Activated CD4-positive, alpha-beta memory T cell treated with anti-CD3 and anti-CD28 coated beads, Interleukin-2, amount 10 ng/mL, durations not matched to agents 7 days and 5 days (primary cell): ENCODE measurements at regions of chr19 and their contacts with region 1.

Region 1: DNA sequence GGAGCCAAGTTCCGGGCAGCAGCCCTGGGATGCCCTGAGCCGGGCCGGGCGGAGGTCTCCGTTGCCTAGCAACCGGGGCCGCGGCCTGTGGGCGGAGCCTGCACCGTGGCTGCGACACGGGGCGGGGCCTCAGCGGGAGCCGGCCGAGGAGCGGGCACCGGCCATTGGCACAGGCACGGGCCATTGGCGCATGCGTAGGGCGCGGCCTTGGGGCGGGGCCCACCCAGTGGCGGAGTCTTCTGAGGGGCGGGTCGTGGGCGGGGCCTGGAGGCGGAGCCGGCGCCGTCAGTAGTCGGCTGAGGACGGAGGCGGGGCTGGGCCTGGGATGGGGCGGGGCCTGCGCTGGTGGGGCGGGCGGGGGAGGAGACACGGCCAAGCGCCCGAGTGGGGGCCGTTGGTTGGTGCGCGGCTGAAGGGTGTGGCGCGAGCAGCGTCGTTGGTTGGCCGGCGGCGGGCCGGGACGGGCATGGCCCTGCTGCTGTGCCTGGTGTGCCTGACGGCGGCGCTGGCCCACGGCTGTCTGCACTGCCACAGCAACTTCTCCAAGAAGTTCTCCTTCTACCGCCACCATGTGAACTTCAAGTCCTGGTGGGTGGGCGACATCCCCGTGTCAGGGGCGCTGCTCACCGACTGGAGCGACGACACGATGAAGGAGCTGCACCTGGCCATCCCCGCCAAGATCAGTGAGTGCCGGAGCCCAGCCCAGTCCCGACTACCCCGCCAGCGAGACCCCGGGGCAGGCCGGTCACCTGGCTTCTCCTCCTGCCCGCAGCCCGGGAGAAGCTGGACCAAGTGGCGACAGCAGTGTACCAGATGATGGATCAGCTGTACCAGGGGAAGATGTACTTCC is at the start of gene IZUMO4:
- DNase-seq: peak; percentile 100
- H3K4me3 Mint-ChIP-seq: peak within 1 kb of the TSS; percentile 99
- H3K27ac Mint-ChIP-seq: peak within 1 kb of the TSS; percentile 88
- H3K4me1 Mint-ChIP-seq: peaks cover 29% of the 10 kb centered on the region
- H3K27me3 Mint-ChIP-seq: no peaks in the 10 kb centered on the region
- total RNA-seq, gene IZUMO4: 10.3 to 10.5 TPM

Region 2: DNA sequence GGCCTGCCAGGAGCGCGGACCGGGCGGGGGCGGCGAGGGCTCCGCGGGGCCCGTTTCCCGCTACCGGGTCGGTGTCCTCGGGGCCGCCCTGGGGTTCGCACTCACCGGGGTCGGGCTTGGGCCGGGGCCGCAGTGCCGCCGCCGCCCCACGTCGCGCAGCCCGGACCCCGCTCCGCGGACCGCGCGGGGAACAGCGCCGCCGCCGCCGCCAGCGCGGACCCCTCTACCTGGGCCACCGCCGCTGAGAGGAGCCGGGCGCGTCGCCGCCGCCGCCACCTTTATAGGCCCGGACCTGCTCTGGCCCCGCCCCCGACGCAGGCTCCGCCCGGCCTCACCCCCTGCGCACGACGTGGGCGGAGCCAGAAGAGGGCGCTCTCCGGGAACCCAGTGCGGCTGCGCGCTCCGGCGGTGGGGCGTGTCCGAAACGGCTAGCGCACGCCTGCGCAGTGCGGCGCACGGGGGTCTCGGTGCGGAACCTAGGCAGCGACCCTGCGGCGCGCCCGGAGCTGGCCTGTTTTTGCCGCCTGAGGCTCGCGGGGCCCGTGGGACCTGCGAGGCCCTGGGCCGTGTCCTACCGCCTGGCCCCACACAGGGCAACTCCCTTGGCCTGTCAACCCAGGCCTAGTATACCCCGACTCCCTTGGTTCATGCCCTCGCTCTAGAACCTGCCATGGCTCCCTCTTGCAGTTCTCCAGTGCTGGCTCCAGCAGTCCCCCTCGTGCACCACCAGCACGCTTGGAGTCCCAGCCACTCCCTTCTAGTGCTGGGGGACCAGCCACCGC is 45.5 kb before region 1 on chr19 and contains the start of gene MKNK2:
- CTCF ChIA-PET with region 1: interaction called, 5 read pairs
- POLR2A ChIA-PET with region 1: interaction called, 13 read pairs
- DNase-seq: peak; percentile 94
- H3K4me3 Mint-ChIP-seq: peak within 1 kb of the TSS; percentile 75
- H3K27ac Mint-ChIP-seq: peak within 1 kb of the TSS; percentile 90
- H3K4me1 Mint-ChIP-seq: peaks cover 58% of the 10 kb centered on the region
- H3K27me3 Mint-ChIP-seq: no peaks in the 10 kb centered on the region
- total RNA-seq, gene MKNK2: 239 to 253 TPM

Region 3: DNA sequence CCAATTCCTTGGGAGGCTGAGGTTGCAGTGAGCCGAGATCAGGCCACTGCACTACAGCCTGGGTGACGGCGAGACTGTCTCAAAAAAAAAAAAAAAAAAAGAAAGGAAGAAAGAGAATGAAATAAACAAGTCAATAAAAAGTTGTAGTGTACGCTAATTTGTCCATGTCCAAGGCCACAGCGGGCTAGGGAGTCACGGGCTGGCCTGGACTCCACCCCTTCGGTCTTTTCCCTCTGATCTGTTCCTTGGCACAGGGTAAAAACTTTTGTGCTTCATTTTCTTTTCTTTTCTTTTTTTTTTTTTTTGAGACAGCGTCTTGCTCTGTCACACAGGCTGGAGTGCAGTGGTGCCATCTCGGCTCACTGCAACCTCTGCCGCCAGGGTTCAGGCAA is 26.3 kb before region 1 on chr19:
- CTCF ChIA-PET with region 1: interaction called, 4 read pairs
- POLR2A ChIA-PET with region 1: interaction called, 22 read pairs
- DNase-seq: no peak
- H3K4me3 Mint-ChIP-seq: no peak overlapping the region
- H3K27ac Mint-ChIP-seq: no peak overlapping the region
- H3K4me1 Mint-ChIP-seq: peaks cover 25% of the 10 kb centered on the region
- H3K27me3 Mint-ChIP-seq: no peaks in the 10 kb centered on the region

Region 4: GRCh38 chr19:2151339-2152229 is 54.9 kb after region 1 on chr19 and contains the start of gene AP3D1:
- CTCF ChIA-PET with region 1: interaction called, 5 read pairs
- POLR2A ChIA-PET with region 1: interaction called, 13 read pairs
- DNase-seq: peak; percentile 100
- H3K4me3 Mint-ChIP-seq: peak within 1 kb of the TSS; percentile 72
- H3K27ac Mint-ChIP-seq: peak within 1 kb of the TSS; percentile 73
- H3K4me1 Mint-ChIP-seq: peaks cover 54% of the 10 kb centered on the region
- H3K27me3 Mint-ChIP-seq: no peaks in the 10 kb centered on the region
- total RNA-seq, gene AP3D1: 104 to 105 TPM